Ovary (tissue), 10 donors: ENCODE measurements at regions of chr11 and their contacts with region 1.

Region 1: DNA sequence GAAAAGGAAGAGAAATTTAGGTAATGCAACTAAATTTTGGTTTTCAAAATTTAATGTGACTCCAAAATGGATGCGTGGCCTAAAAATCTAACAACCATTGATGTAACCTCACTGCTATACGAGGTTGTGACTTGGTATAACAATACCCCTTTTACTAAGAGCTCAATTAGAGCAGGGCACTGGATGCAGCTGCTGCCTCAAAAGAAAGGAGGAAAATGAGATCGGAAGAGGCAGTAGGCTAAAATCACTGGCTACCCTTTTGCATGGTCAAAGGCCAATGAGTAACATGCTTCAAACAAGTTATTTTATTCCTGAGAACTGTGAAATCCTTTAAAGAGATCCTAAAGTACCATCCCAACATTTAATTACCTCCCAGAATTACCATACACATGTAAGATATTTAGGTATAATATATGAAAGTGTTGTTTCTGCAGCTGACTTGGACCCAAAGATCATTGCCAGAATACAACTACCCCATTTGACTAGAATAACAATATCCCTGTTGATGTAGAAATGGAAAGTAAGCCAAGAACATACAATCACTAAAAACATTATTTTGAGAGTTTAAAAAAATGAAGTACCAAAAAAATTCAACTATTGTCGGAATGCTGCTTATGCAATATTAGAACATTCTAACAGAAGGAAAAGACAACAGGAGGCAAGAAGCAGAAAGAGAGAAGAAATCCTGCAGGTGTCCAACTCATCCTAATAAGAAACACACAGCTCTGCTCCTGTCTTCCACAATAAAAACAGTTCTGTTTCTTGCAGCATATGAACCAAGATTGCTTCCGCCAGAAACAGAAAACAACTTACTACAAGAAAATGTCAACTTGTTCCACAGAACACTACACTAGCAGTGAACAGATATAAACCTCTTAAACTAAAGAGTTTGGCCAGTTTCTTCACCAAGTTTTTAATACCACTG is 15.0 kb downstream of the SIK3 start:
- DNase-seq: no peak
- H3K4me3 ChIP-seq: no peak overlapping the region
- H3K27ac ChIP-seq: peak overlapping the region in 1 of 2 donors; percentile 34
- H3K4me1 ChIP-seq: peaks cover 14% of the 10 kb centered on the region
- H3K27me3 ChIP-seq: no peaks in the 10 kb centered on the region
- CTCF ChIP-seq: no peak
- EP300 ChIP-seq: no peak
- POLR2A ChIP-seq: no peak

Region 2: DNA sequence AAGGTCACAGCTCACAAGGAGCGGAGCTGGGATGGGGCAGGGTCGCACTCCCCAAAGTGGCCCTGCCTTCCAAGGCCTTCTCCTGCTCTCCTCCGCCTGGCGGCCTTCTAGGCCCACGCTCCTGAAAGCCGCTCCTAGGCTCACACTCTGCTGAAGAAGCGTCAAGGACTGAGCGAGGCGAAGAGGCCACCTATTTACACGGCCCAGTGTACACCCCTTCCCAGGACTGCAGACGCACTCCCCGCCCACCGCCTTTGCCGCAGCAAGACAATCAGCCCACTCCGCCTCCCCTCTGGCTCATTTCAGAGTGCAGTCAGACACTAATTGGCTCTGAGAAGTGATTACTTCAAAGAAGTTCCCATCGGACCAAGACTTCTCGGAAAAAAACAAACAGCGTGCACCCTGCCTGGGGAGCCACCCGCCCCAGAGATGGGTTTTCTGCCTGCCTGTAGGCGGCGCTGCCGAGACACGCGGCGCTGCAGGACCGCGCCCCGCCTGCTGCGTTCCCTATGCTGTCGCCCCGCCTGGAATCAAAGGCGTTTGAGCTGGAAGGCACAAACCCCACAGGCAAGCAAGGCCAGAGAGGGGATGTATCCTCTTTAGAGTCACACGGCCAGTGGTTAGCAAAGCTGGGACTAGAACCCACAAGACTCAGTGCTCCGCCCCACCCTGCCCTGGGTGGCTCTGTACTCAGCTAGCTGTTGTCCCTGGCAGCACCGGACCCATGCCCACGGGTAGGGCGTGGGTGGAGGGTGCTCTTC is 725.3 kb before region 1 on chr11:
- intact Hi-C with region 1: no loop called
- DNase-seq: peak in 2 of 5 donors; percentile 25 to 40
- H3K4me3 ChIP-seq: no peak overlapping the region
- H3K27ac ChIP-seq: no peak overlapping the region
- H3K4me1 ChIP-seq: no peaks in the 10 kb centered on the region
- H3K27me3 ChIP-seq: no peaks in the 10 kb centered on the region
- CTCF ChIP-seq: peak in 1 of 3 donors; percentile 22
- EP300 ChIP-seq: no peak
- POLR2A ChIP-seq: no peak

Region 3: DNA sequence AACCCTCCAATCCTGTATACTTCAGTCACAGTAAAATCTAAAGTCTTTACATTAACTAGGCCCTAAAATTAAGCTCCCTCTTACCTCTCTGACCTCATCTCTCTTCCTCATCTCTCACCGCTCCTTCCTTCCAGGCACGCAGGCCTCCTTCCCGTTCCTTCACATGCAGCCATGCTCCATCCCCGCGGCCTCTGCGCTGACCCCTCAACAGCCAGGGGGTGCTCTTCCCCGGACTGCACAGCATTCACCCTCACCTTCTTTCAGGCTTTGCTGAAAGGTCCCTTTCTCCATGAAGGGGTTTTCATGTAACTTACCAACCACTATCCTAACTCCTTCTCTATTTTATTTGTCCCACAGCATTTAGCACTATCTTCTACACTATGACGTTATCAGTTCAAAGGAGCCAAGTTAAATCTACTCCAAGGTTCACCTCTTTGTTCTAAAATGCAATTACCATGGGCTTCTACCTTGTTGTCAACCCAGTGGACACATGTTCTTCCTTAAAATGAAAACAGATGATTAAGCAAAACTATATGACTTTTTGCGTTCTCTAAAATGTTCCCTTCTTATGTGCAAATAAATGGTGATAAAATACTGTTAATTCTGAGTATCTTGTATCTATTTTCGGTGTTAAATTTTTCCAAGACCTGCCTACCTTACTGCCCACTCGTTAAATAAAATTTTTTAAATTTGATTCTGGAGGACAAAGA is 188.1 kb before region 1 on chr11:
- intact Hi-C with region 1: loop called in 1 of 4 experiments (anchors 10 kb)
- DNase-seq: no peak
- H3K4me3 ChIP-seq: no peak overlapping the region
- H3K27ac ChIP-seq: no peak overlapping the region
- H3K4me1 ChIP-seq: no peaks in the 10 kb centered on the region
- H3K27me3 ChIP-seq: no peaks in the 10 kb centered on the region
- CTCF ChIP-seq: no peak
- EP300 ChIP-seq: no peak
- POLR2A ChIP-seq: no peak